ENCODE measurements at regions of chr9 and their contacts with region 1.

Region 1: GRCh38 chr9:130770679-130771442 is 64.2 kb upstream of the ABL1 start:
- DNase-seq: no peak
- ATAC-seq: peak; percentile 71 to 76 (median 74)
- H3K4me3 ChIP-seq: no peak overlapping the region
- H3K27ac ChIP-seq: no peak overlapping the region
- H3K4me1 ChIP-seq: peaks cover 0 to 12% (median 0%) of the 10 kb centered on the region in 4 donors
- H3K27me3 ChIP-seq: no peaks in the 10 kb centered on the region
- CTCF ChIP-seq: peak; percentile 52 to 63 (median 61)
- POLR2A ChIP-seq: no peak

Region 2: DNA sequence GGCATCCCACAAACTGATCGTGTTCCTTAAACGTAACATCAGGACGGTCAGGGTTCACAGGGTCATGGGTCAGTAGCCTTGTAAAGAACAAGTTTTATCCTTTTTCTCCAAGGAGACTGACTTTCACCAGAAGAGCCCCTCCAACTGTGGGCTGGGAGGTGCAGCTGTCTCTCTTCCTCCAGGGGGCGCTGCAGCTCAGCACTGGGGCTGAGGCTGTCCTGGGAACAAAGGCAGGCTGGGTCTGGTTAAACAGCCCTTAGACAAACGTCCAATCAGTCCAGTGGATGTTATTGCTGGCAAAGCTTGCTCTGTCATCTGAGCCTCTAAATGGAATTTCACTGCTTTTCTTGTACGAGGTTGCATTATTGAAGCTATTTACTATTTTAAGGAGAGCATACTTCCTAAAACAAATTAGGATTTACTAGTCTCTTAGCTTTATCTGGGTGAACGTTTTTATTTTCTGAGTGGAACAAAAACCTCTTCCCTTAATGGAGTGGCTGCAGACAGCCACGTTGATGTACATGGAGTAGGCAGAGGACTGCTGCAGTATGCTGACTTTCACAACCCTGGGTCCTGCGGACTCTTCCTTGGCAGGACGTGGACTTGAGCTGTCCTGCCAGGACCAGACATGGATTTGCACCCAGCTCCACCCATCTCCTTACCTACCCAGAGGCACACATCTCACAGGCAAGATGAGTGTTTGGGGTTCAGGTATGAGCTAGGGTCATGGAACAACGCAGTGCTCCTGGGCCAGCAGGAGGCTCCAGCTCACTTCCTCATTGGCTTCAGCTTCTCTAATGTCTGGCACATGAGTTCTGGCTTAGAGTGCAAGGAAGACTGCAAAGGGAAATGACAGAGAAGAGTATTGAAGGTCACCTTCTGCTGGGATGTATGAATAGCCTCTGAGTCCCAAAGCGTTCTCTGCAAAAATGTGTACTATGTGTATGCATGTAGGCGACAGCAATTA is 69.5 kb before region 1 on chr9:
- intact Hi-C with region 1: loop called in 1 of 2 experiments (anchors 10 kb)
- DNase-seq: peak; percentile 65 to 71 (median 65)
- ATAC-seq: peak; percentile 70 to 73 (median 72)
- H3K4me3 ChIP-seq: no peak overlapping the region
- H3K27ac ChIP-seq: no peak overlapping the region
- H3K4me1 ChIP-seq: peaks cover 0 to 14% (median 6%) of the 10 kb centered on the region in 4 donors
- H3K27me3 ChIP-seq: no peaks in the 10 kb centered on the region
- CTCF ChIP-seq: peak; percentile 61 to 91 (median 84)
- POLR2A ChIP-seq: no peak

Region 3: GRCh38 chr9:130847327-130848217 is 76.7 kb after region 1 on chr9:
- intact Hi-C with region 1: no loop called
- DNase-seq: peak in 2 of 3 donors; percentile 59
- ATAC-seq: peak; percentile 81 to 88 (median 84)
- H3K4me3 ChIP-seq: no peak overlapping the region
- H3K27ac ChIP-seq: peak overlapping the region; percentile 24 to 83 (median 52)
- H3K4me1 ChIP-seq: peaks cover 0 to 19% (median 0%) of the 10 kb centered on the region in 4 donors
- H3K27me3 ChIP-seq: no peaks in the 10 kb centered on the region
- CTCF ChIP-seq: no peak
- POLR2A ChIP-seq: no peak

Region 4: GRCh38 chr9:130860458-130861316 is 89.8 kb after region 1 on chr9:
- intact Hi-C with region 1: loop called (anchors 5 to 10 kb)
- DNase-seq: peak in 2 of 3 donors; percentile 68 to 70
- ATAC-seq: peak; percentile 70 to 87 (median 82)
- H3K4me3 ChIP-seq: no peak overlapping the region
- H3K27ac ChIP-seq: peak overlapping the region in 2 of 3 donors; percentile 16 to 68
- H3K4me1 ChIP-seq: peaks cover 0 to 3% (median 0%) of the 10 kb centered on the region in 4 donors
- H3K27me3 ChIP-seq: no peaks in the 10 kb centered on the region
- CTCF ChIP-seq: peak in 2 of 4 donors; percentile 12 to 19
- POLR2A ChIP-seq: no peak

Region 5: GRCh38 chr9:130866474-130866965 is 95.7 kb after region 1 on chr9:
- intact Hi-C with region 1: loop called (anchors 5 to 10 kb)
- DNase-seq: peak; percentile 57 to 72 (median 60)
- ATAC-seq: peak; percentile 83 to 88 (median 87)
- H3K4me3 ChIP-seq: no peak overlapping the region
- H3K27ac ChIP-seq: no peak overlapping the region
- H3K4me1 ChIP-seq: no peaks in the 10 kb centered on the region
- H3K27me3 ChIP-seq: no peaks in the 10 kb centered on the region
- CTCF ChIP-seq: peak; percentile 75 to 87 (median 82)
- POLR2A ChIP-seq: no peak